PC-9 (cell line): ENCODE measurements at regions of chr4 and their contacts with region 1.

Region 1: DNA sequence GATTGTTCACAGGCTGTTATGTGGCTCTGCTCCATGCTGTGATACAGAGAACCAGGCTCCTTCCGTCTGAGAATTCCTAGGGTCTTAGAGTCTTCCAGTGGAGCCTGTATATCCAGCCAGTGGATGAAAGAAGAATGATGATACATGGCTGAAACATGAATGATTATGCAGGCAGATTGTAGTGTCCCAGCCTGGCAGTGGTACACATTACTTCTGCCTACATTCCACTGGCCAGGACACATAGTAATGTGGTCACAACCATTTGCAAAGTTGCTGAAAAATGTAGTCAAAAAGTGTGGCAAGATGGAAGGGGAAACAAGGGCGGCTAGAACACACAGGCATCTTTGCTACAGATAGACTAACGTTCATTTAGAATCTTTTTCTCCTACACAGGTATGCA is 4.5 kb upstream of the GBA3 start:
- DNase-seq: no peak
- H3K4me3 ChIP-seq: no peak overlapping the region
- H3K27ac ChIP-seq: no peak overlapping the region
- H3K4me1 ChIP-seq: no peaks in the 10 kb centered on the region
- H3K27me3 ChIP-seq: no peaks in the 10 kb centered on the region
- CTCF ChIP-seq: no peak

Region 2: DNA sequence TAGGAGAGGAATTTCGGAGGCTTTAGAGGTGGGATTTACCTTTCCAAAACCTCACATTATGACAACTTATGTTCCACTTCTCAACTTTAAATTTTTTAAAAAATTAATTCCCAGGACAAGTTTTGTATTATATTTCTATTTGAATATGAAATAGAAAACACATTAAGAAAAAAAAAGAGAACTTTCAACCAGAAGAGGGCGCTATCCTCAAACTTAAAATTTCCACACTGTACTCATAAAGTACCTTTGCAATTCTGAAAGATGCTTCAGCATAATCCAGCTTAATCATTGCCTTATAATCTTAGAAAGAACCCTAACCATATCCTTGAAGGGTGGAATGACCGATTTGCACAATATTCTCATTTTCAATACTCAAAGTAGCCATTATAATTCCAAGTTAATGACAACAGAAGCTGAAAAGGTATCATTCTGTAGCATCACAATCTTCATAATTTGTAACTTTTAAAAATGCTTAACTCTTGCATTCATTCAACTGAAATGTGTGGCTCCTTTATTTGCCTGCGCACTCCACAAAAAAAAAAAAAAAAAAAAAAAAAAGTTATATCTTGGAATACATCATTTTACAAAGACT is 897.7 kb before region 1 on chr4:
- CTCF ChIA-PET with region 1: interaction called, 3 read pairs
- POLR2A ChIA-PET with region 1: no interaction called
- intact Hi-C with region 1: loop called (anchors 1 kb)
- DNase-seq: no peak
- H3K4me3 ChIP-seq: no peak overlapping the region
- H3K27ac ChIP-seq: no peak overlapping the region
- H3K4me1 ChIP-seq: no peaks in the 10 kb centered on the region
- H3K27me3 ChIP-seq: no peaks in the 10 kb centered on the region
- CTCF ChIP-seq: peak; percentile 68

Region 3: DNA sequence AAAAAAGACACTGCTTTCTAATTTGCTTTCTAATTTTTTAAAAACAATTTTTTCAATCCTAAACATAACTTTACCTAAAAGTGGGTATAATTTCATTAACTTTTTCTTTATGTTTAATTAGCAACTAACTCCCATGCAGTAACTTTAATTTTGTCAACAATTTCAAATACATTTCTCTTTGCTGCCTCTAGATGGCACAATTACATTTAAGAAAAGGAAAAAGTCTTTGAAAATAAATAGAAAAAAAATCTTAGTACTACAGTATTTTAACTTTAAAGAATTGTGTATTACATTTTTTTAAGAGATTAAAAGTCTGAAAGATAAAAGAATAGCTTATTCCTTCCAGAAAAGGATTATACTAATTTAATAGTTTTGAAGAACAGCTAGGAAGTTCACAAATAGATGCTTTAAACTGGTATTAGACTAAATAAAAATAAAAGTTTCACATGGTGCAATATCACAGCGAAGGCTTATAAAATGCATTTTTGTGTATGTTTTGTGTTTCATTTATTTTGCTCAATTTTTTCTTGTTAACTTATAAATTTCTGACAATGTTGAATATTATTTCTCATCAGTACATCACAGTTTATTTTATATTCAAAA is 277.5 kb before region 1 on chr4:
- CTCF ChIA-PET with region 1: no interaction called
- POLR2A ChIA-PET with region 1: no interaction called
- intact Hi-C with region 1: loop called (anchors 1 kb)
- DNase-seq: peak in 1 of 2 experiments; percentile 44
- H3K4me3 ChIP-seq: no peak overlapping the region
- H3K27ac ChIP-seq: no peak overlapping the region
- H3K4me1 ChIP-seq: no peaks in the 10 kb centered on the region
- H3K27me3 ChIP-seq: no peaks in the 10 kb centered on the region
- CTCF ChIP-seq: peak; percentile 73

Region 4: GRCh38 chr4:24419181-24420034 is 1731.2 kb after region 1 on chr4:
- CTCF ChIA-PET with region 1: no interaction called
- POLR2A ChIA-PET with region 1: no interaction called
- intact Hi-C with region 1: loop called (anchors 10 kb)
- DNase-seq: peak; percentile 60 to 61
- H3K4me3 ChIP-seq: no peak overlapping the region
- H3K27ac ChIP-seq: no peak overlapping the region
- H3K4me1 ChIP-seq: no peaks in the 10 kb centered on the region
- H3K27me3 ChIP-seq: peaks cover 13% of the 10 kb centered on the region; the same call in 1 of the 2 replicates
- CTCF ChIP-seq: peak; percentile 89